SK-N-SH (cell line): ENCODE measurements at regions of chr7 and their contacts with region 1.

Region 1: GRCh38 chr7:6917258-6917657 is 91.2 kb upstream of the CCZ1B start:
- DNase-seq: peak; percentile 42
- H3K4me3 ChIP-seq: no peak overlapping the region
- H3K27ac ChIP-seq: no peak overlapping the region
- H3K4me1 ChIP-seq: no peaks in the 10 kb centered on the region; a peak in 1 of 4 replicates
- H3K27me3 ChIP-seq: no peaks in the 10 kb centered on the region
- CTCF ChIP-seq: no peak
- EP300 ChIP-seq: no peak
- RAD21 ChIP-seq: no peak

Region 2: GRCh38 chr7:6338551-6339274 is 578.5 kb before region 1 on chr7:
- CTCF ChIA-PET with region 1: no interaction called
- POLR2A ChIA-PET with region 1: no interaction called
- DNase-seq: no peak
- H3K4me3 ChIP-seq: no peak overlapping the region
- H3K27ac ChIP-seq: no peak overlapping the region
- H3K4me1 ChIP-seq: no peaks in the 10 kb centered on the region
- H3K27me3 ChIP-seq: no peaks in the 10 kb centered on the region
- CTCF ChIP-seq: no peak
- EP300 ChIP-seq: no peak
- RAD21 ChIP-seq: no peak

Region 3: DNA sequence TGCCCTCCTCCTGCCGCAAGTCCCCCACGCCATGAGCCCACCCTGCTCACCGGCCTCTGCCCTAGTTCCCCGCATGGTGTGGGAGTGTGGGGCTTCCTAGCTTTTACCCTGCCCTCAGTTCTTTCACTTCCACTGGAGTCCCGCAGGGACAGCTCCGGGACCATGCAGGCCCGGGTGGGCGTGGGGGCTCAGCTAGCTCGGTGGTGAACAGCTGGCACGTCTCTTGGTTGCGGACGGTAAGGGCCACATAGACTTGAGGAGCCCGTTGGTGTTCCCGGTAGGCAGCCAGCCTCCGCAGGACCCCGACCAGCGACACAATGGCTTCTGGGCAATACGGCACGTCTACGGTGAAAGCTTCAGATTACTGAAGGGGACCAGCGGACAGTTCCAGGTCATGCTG is 17.7 kb after region 1 on chr7:
- CTCF ChIA-PET with region 1: interaction called, 11 read pairs
- POLR2A ChIA-PET with region 1: no interaction called
- DNase-seq: no peak
- H3K4me3 ChIP-seq: no peak overlapping the region
- H3K27ac ChIP-seq: no peak overlapping the region
- H3K4me1 ChIP-seq: no peaks in the 10 kb centered on the region
- H3K27me3 ChIP-seq: no peaks in the 10 kb centered on the region
- CTCF ChIP-seq: no peak
- EP300 ChIP-seq: no peak
- RAD21 ChIP-seq: no peak